Ascending aorta (tissue), 2 donors: ENCODE measurements at regions of chr4 and their contacts with region 1.

Region 1: DNA sequence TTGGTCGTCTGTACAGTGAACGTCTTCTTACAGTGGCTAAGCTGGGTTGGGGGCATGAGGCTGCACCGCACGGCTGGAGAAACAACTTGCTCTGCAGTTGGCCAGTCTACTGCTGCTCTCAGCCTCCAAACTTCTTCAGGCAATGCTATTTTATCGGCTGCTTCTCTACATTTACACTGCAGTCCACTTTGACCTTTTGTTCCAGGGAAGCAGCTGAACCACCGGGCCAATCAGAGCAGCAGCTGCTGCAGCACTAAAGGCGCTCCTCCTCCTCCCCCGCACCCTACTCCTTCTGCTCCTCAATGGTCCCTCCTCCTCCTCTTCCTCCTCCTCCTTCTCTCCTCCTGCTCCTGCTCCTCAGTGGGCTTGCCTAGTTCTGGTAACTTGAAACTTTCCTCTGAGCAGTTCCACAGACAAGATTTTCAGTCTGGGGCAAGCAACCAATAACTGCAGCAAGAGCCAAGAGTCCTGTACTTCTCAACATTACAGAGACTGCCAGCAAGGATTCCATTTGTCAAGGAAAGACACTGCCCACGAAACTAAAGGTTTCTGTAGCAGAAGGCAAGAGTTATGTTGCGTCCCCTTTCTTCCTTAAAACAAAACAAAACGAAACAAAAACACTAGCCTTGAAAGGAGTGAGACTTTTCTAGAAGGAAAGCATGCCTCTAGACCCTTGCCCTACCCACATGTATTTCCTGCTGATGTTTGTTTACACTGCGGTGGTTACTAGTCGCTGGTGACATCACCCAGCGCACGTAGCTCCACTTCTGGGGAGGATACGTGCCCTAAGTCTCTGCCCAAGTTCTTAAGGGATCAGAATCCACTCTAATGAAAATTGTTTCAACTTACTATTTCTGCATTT is 125.7 kb upstream of the NAP1L5 start:
- DNase-seq: peak; percentile 76 to 93
- H3K4me3 ChIP-seq: peak overlapping the region; percentile 57 to 64
- H3K27ac ChIP-seq: peak overlapping the region; percentile 77 to 85
- H3K4me1 ChIP-seq: peaks cover 0 to 29% of the 10 kb centered on the region in 2 donors
- H3K27me3 ChIP-seq: no peaks in the 10 kb centered on the region
- CTCF ChIP-seq: no peak

Region 2: GRCh38 chr4:88523325-88524129 is 299.8 kb before region 1 on chr4 and contains the start of gene PYURF:
- intact Hi-C with region 1: loop called (anchors 10 kb)
- DNase-seq: peak; percentile 88 to 99
- H3K4me3 ChIP-seq: peak within 1 kb of the TSS; percentile 87 to 95
- H3K27ac ChIP-seq: peak within 1 kb of the TSS; percentile 87 to 94
- H3K4me1 ChIP-seq: peaks cover 0 to 16% of the 10 kb centered on the region in 2 donors
- H3K27me3 ChIP-seq: no peaks in the 10 kb centered on the region
- CTCF ChIP-seq: peak in 1 of 3 experiments; percentile 5
- total RNA-seq, gene PYURF: 91.6 TPM

Region 3: DNA sequence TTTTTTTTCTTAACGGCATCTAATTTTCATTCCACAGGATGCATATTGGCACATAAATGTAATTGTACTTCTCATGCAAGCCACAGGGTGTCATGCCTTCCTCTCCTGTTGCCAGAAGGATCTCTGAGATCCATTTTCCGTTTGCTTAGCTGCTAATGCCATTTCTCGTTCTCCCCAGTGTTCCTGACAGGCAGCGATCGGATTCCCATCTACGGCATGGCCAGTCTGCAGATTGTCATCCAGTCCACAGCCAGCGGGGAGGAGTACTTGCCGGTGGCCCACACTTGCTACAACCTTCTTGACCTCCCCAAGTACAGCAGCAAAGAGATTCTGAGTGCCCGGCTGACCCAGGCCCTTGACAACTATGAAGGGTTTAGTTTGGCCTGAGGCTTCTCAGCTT is 116.7 kb before region 1 on chr4:
- intact Hi-C with region 1: loop called (anchors 2 kb)
- DNase-seq: peak in 1 of 2 donors; percentile 79
- H3K4me3 ChIP-seq: peak overlapping the region in 1 of 2 donors; percentile 38
- H3K27ac ChIP-seq: peak overlapping the region; percentile 45 to 79
- H3K4me1 ChIP-seq: peaks cover 3% of the 10 kb centered on the region in 2 donors
- H3K27me3 ChIP-seq: no peaks in the 10 kb centered on the region
- CTCF ChIP-seq: peak; percentile 42 to 78 (median 63)

Region 4: GRCh38 chr4:88765729-88766128 is 57.6 kb before region 1 on chr4:
- intact Hi-C with region 1: loop called (anchors 5 kb)
- DNase-seq: peak in 1 of 2 donors; percentile 82
- H3K4me3 ChIP-seq: no peak overlapping the region
- H3K27ac ChIP-seq: peak overlapping the region; percentile 16 to 41
- H3K4me1 ChIP-seq: peaks cover 0 to 14% of the 10 kb centered on the region in 2 donors
- H3K27me3 ChIP-seq: no peaks in the 10 kb centered on the region
- CTCF ChIP-seq: no peak

Region 5: DNA sequence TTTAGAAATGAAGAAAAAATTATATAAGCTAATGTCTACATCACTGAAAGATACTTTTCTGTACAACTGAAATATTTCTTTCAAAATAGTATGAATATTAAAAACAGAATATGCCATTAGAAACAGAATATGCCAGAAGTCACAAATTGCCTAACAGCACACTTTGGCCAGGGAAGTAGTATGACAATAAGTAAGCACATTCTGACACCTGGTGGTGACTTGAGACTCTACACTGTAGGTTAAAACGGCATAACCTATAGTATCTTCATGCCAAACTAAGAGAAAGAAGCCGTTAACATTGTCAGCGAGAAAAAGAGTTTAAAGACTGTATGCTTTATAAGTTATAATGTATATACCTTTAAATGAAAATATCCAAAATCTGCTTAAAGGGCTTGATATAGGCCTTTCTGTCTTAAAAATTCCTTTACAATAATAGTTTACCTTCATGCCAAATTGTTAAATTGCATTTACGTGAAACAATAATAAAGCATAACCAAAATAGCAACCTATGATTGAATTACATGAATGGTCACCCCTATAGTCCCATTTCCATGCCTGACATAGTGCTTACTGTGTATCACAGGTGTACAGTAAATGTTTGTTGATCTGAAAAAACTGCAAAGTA is 200.9 kb after region 1 on chr4:
- intact Hi-C with region 1: loop called (anchors 1 kb)
- DNase-seq: peak in 1 of 2 donors; percentile 77
- H3K4me3 ChIP-seq: no peak overlapping the region
- H3K27ac ChIP-seq: no peak overlapping the region
- H3K4me1 ChIP-seq: no peaks in the 10 kb centered on the region
- H3K27me3 ChIP-seq: no peaks in the 10 kb centered on the region
- CTCF ChIP-seq: peak; percentile 71 to 85 (median 81)

Region 6: GRCh38 chr4:89110986-89111832 is 287.9 kb after region 1 on chr4 and contains the start of gene TIGD2:
- intact Hi-C with region 1: loop called (anchors 1 kb)
- DNase-seq: peak; percentile 29 to 91
- H3K4me3 ChIP-seq: peak within 1 kb of the TSS; percentile 68 to 79
- H3K27ac ChIP-seq: peak within 1 kb of the TSS; percentile 77 to 81
- H3K4me1 ChIP-seq: peaks cover 3 to 4% of the 10 kb centered on the region in 2 donors
- H3K27me3 ChIP-seq: no peaks in the 10 kb centered on the region
- CTCF ChIP-seq: peak; percentile 79 to 86 (median 82)
- total RNA-seq, gene TIGD2: 0.21 TPM